H1 (cell line): ENCODE measurements at regions of chr5 and their contacts with region 1.

Region 1: GRCh38 chr5:5165541-5166002 is 25.4 kb downstream of the ADAMTS16 start:
- DNase-seq: no peak
- H3K4me3 ChIP-seq: no peak overlapping the region
- H3K27ac ChIP-seq: no peak overlapping the region
- H3K4me1 ChIP-seq: peaks cover 0 to 2% (median 0%) of the 10 kb centered on the region in 4 experiments; a peak in 1 of 7 replicates
- H3K27me3 ChIP-seq: no peaks in the 10 kb centered on the region
- CTCF ChIP-seq: no peak
- EP300 ChIP-seq: no peak
- POLR2A ChIP-seq: no peak
- RAD21 ChIP-seq: no peak

Region 2: GRCh38 chr5:5183189-5183699 is 17.7 kb after region 1 on chr5:
- CTCF ChIA-PET with region 1: interaction called, 7 read pairs
- POLR2A ChIA-PET with region 1: interaction called, 25 read pairs
- DNase-seq: peak; percentile 78 to 80
- H3K4me3 ChIP-seq: peak overlapping the region in 3 of 4 experiments; percentile 8 to 43 (median 19); a peak in 4 of 8 replicates
- H3K27ac ChIP-seq: peak overlapping the region; percentile 75
- H3K4me1 ChIP-seq: peaks cover 20 to 36% (median 29%) of the 10 kb centered on the region in 4 experiments
- H3K27me3 ChIP-seq: no peaks in the 10 kb centered on the region
- CTCF ChIP-seq: no peak
- EP300 ChIP-seq: no peak
- POLR2A ChIP-seq: peak in 1 of 2 experiments; percentile 76; a peak in 2 of 3 replicates
- RAD21 ChIP-seq: no peak; a peak in 1 of 4 replicates

Region 3: DNA sequence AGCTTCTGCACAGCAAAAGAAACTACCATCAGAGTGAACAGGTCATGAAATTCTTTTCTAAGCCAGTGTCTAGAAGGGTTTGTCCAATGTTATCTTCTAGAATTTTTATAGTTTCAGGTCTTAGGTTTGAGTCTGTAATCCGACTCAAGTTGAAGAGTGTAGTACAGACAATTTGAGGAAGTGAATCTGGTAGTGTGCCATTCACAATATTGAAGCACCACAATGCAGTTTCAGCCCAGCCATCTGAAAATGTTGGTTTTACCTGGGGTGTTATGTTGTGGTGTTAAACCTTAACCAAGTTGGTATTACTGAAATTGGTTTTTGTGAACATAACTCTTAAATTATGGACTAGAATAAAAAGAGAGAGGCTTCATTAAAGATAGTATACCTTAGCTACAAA is 51.8 kb after region 1 on chr5:
- CTCF ChIA-PET with region 1: no interaction called
- POLR2A ChIA-PET with region 1: no interaction called
- DNase-seq: no peak
- H3K4me3 ChIP-seq: no peak overlapping the region
- H3K27ac ChIP-seq: no peak overlapping the region
- H3K4me1 ChIP-seq: peaks cover 0 to 3% (median 1%) of the 10 kb centered on the region in 4 experiments; a peak in 2 of 7 replicates
- H3K27me3 ChIP-seq: no peaks in the 10 kb centered on the region
- CTCF ChIP-seq: no peak
- EP300 ChIP-seq: no peak
- POLR2A ChIP-seq: no peak
- RAD21 ChIP-seq: no peak